ENCODE measurements at regions of chr7 and their contacts with region 1.

Region 1: DNA sequence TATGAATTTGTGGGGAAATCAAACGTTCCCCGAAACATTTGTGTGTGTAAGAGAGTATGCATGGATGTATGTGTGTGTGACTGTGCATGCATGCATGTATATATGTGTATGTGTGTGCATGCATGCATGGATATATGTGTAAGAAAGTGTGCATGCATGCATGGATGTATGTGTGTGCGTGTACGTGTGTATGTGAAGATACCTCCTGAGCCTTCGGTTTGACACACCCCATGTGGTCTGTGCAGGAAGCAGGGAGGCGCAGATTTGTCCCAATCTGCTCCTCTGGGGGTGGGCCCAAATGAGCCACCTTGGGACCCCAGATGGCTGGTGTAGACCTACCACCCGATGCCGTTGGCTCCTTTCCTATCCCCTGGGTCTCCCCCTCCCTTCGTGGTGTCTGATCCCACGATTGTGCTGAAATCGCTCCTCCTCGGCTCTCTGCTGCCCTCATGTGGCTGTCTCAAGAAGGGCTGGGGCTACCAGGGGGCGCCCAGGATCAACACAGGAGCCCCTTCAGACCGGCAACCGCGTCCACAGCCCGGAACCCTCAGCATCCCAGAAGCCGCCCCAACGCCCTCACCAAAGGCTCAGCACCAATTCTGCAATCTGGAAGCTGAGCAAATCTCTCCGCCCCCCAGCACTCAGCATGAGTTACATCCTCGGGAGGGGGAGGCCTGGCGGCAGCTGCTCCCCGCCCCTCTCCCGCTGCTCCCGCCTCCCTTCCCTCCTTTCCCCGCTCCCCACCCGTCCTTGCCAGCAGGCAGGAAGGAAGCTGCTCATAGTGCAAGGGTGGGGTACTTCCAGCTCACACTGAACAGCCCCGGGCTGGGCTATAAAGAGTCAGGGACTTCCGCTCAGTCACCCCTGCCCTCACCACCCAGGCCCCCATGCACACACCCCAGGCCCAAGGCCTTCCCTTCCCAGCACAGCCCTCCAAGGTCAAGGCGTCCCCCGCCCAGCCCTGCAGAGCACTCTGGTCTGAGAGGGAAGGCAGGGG is 2.3 kb upstream of the NOS3 start:
- DNase-seq: peak; percentile 73
- H3K4me3 ChIP-seq: no peak overlapping the region
- H3K27ac ChIP-seq: peak overlapping the region; percentile 40
- H3K4me1 ChIP-seq: no peaks in the 10 kb centered on the region
- H3K27me3 ChIP-seq: no peaks in the 10 kb centered on the region
- CTCF ChIP-seq: peak; percentile 77

Region 2: GRCh38 chr7:150716368-150716767 is 272.2 kb before region 1 on chr7 and contains the start of gene GIMAP1:
- intact Hi-C with region 1: no loop called
- DNase-seq: no peak
- H3K4me3 ChIP-seq: peak within 1 kb of the TSS; percentile 20
- H3K27ac ChIP-seq: peak within 1 kb of the TSS; percentile 53
- H3K4me1 ChIP-seq: no peaks in the 10 kb centered on the region
- H3K27me3 ChIP-seq: no peaks in the 10 kb centered on the region
- CTCF ChIP-seq: no peak
- total RNA-seq, gene GIMAP1: 0.94 to 1.6 TPM

Region 3: GRCh38 chr7:150787321-150788281 is 200.9 kb before region 1 on chr7:
- intact Hi-C with region 1: loop called (anchors 10 kb)
- DNase-seq: peak; percentile 57
- H3K4me3 ChIP-seq: no peak overlapping the region
- H3K27ac ChIP-seq: peak overlapping the region; percentile 89
- H3K4me1 ChIP-seq: peaks cover 14% of the 10 kb centered on the region
- H3K27me3 ChIP-seq: no peaks in the 10 kb centered on the region
- CTCF ChIP-seq: no peak

Region 4: GRCh38 chr7:150898475-150899011 is 90.0 kb before region 1 on chr7:
- intact Hi-C with region 1: loop called (anchors 2 kb)
- DNase-seq: peak; percentile 87
- H3K4me3 ChIP-seq: no peak overlapping the region
- H3K27ac ChIP-seq: no peak overlapping the region
- H3K4me1 ChIP-seq: peaks cover 14% of the 10 kb centered on the region
- H3K27me3 ChIP-seq: no peaks in the 10 kb centered on the region
- CTCF ChIP-seq: peak; percentile 94

Region 5: DNA sequence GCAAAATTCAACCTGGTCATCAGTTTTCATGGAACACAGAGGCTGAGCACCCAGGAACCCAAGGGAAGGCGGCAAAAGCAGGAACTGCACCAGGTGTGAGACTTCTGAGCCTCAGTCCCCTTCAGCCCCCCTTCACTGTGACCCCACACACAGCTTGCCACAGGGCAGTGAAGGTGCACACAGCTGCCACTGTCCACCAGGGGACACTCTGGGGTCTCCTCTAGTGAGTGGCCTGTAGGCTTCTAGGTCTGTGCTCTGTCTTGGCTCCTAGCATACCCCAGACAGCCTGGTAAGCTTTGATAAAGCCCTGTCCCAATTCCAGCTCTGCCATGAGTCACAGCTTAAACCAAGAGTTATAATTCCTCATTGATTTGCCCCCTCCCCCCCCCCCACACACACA is 22.5 kb before region 1 on chr7:
- intact Hi-C with region 1: loop called (anchors 2 kb)
- DNase-seq: no peak
- H3K4me3 ChIP-seq: no peak overlapping the region
- H3K27ac ChIP-seq: no peak overlapping the region
- H3K4me1 ChIP-seq: no peaks in the 10 kb centered on the region
- H3K27me3 ChIP-seq: no peaks in the 10 kb centered on the region
- CTCF ChIP-seq: no peak